H1 (cell line): ENCODE measurements at regions of chr7 and their contacts with region 1.

Region 1: DNA sequence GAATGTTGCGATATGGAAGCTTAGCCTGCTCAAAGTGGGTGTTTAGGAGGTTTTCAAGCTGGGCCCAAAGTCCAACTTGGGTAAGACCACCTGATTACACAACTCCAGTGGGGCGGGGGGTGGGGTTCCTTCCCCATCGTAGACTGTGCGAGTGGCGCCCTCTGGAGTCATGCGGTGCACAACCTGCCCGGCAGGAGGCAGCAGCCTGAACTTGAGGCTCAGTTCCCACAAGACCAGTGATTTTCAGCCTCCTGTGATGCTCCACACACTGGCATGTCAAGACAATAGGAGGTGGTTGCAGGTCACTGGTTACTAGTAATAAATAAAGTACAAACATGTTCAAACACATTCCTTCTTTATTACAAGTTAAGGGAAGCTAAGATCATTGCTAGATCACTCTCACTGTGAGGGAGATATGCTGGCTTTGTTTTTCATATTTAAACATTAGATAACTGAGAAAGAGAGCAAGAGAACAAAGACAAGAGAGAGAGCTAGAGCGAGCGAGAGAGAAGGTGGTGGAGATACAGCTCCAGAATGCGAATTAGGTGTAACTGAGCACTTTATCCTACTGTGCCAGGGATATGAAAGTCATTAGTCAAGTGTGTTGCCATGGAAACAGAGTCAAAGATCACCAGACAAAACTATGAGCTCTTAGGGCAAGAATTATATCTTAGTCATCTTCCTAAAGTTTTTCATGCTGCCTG is 97.4 kb upstream of the BMPER start:
- DNase-seq: peak; percentile 46 to 83
- H3K4me3 ChIP-seq: no peak overlapping the region
- H3K27ac ChIP-seq: no peak overlapping the region
- H3K4me1 ChIP-seq: no peaks in the 10 kb centered on the region
- H3K27me3 ChIP-seq: no peaks in the 10 kb centered on the region
- CTCF ChIP-seq: peak; percentile 85 to 92 (median 87)
- EP300 ChIP-seq: no peak
- POLR2A ChIP-seq: no peak
- RAD21 ChIP-seq: peak; percentile 80 to 86

Region 2: DNA sequence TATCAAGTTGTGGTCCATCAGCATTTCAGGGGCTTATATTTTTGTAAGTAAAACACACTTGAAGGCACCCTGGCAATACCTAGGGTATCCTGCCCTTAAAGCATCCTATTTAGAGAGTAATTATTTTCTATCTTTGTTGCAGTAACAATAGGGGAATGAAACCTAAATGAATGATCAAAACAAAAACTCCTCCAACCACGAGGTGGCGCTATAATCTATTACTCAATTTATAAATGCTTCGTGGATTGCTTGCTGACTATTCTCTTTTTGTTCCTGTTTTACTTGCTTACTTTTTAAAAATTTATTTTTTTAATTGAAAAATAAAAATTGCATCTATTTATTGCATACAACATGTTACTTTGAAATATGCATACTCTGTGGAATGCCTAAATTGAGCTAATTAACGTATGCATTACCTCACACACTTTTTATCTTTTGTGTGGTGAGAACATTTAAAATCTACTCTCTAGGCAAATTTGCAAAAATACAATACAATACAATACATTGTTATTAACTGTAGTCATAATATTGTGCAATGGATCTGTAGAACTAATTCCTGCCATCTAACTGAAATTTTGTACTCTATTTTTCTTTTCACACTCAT is 50.3 kb before region 1 on chr7:
- CTCF ChIA-PET with region 1: interaction called, 46 read pairs
- POLR2A ChIA-PET with region 1: no interaction called
- DNase-seq: no peak
- H3K4me3 ChIP-seq: no peak overlapping the region
- H3K27ac ChIP-seq: no peak overlapping the region
- H3K4me1 ChIP-seq: peaks cover 0 to 5% (median 3%) of the 10 kb centered on the region in 4 experiments; a peak in 3 of 7 replicates
- H3K27me3 ChIP-seq: no peaks in the 10 kb centered on the region
- CTCF ChIP-seq: peak in 2 of 3 experiments; percentile 18 to 41; a peak in 2 of 4 replicates
- EP300 ChIP-seq: no peak
- POLR2A ChIP-seq: no peak
- RAD21 ChIP-seq: peak; percentile 52

Region 3: DNA sequence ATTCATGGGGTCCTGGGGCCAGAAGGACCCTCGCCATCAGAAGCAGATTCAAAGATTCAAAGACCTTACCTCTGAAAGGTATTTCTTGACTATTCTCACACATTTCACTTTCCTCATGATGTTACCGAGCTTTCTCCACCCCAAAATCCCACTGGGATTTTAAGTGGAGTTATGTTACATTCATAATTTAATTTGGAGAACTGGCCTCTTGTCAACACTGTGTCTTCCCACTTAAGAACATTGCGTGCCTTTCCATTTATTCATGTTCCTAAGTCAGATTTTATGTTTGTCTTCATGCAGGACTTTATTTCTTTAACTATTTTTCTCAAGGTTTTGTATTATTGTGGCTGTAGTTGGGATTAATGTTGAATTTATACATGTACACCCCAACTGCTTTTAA is 26.1 kb before region 1 on chr7:
- CTCF ChIA-PET with region 1: interaction called, 22 read pairs
- POLR2A ChIA-PET with region 1: no interaction called
- DNase-seq: no peak
- H3K4me3 ChIP-seq: no peak overlapping the region
- H3K27ac ChIP-seq: no peak overlapping the region
- H3K4me1 ChIP-seq: no peaks in the 10 kb centered on the region
- H3K27me3 ChIP-seq: peaks cover 0 to 1% (median 0%) of the 10 kb centered on the region in 4 experiments; a peak in 1 of 7 replicates
- CTCF ChIP-seq: no peak
- EP300 ChIP-seq: no peak
- POLR2A ChIP-seq: no peak
- RAD21 ChIP-seq: no peak

Region 4: DNA sequence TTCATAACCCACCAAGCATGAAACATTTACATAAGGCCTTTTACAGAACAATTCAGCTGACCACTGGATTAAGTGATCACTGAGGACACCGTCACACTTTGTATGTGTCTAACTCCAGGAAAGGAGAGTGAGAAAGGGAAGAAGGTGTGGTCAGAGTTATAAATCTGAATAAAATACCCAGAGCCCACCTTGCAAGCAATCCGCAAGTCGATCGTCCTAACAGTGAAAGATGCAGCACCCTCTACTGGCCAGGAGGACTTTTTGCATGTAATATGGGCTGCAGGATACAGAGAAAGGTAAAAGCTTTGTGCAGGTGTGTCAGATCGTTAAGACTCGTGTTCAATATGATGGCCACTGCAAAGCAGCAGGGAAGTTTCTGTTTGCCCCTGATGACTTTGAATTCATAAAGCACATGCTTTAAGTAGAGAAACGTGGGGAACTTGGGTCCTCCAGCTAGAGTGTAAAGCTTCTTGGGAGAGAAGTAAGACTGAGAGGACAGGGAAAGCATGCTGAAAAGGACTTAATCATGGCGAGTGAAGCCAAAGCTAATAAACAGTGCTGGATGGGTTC is 28.9 kb after region 1 on chr7:
- CTCF ChIA-PET with region 1: interaction called, 27 read pairs
- POLR2A ChIA-PET with region 1: no interaction called
- DNase-seq: peak in 1 of 2 experiments; percentile 82
- H3K4me3 ChIP-seq: no peak overlapping the region
- H3K27ac ChIP-seq: no peak overlapping the region
- H3K4me1 ChIP-seq: no peaks in the 10 kb centered on the region
- H3K27me3 ChIP-seq: no peaks in the 10 kb centered on the region
- CTCF ChIP-seq: peak; percentile 40 to 80 (median 47); a peak in 3 of 4 replicates
- EP300 ChIP-seq: no peak
- POLR2A ChIP-seq: no peak
- RAD21 ChIP-seq: peak; percentile 10 to 15; a peak in 1 of 4 replicates

Region 5: DNA sequence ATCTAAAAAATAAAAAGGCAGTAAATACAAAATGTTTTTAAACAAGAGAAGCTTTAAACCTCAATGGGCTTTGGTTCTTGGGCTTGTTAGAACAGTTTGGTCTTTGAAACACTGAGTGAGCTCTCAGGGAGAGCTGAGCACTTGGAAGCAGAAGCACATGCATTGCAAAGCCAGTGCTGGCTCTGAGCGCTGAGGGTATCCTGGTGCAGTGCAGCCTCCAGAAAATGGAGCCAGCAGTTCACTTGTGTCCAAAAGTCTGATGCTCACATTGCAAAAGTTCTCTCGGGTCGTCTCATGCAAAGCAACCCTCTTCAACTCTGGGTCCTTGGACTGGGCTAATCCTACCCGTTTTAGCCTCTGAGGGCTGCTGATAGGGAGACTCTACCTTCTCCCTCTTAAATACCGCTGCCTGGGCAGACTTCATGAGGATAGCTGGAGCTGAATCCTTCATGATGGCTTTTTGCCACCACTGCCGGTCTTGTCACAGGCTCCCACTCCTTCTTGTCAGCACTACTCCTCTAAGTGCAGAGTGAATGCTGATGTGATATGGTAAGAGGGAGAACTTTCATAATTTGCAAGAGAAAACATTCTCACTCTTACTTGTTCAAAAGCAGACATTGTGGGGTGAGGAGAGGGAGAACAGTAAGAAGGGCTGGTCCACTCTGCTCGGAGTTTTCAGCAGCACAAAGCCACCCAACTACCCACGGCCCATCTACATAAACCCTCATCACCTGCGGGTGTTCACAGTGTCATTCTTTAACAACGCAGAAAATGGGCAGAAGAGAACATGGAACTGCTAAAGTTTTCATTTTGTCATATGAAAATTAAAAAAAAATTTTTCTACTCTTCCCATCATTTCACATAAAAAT is 55.2 kb after region 1 on chr7:
- CTCF ChIA-PET with region 1: no interaction called
- POLR2A ChIA-PET with region 1: no interaction called
- DNase-seq: no peak
- H3K4me3 ChIP-seq: no peak overlapping the region
- H3K27ac ChIP-seq: no peak overlapping the region
- H3K4me1 ChIP-seq: peaks cover 0 to 6% (median 2%) of the 10 kb centered on the region in 4 experiments; a peak in 3 of 7 replicates
- H3K27me3 ChIP-seq: no peaks in the 10 kb centered on the region
- CTCF ChIP-seq: no peak
- EP300 ChIP-seq: no peak
- POLR2A ChIP-seq: no peak
- RAD21 ChIP-seq: no peak

Region 6: DNA sequence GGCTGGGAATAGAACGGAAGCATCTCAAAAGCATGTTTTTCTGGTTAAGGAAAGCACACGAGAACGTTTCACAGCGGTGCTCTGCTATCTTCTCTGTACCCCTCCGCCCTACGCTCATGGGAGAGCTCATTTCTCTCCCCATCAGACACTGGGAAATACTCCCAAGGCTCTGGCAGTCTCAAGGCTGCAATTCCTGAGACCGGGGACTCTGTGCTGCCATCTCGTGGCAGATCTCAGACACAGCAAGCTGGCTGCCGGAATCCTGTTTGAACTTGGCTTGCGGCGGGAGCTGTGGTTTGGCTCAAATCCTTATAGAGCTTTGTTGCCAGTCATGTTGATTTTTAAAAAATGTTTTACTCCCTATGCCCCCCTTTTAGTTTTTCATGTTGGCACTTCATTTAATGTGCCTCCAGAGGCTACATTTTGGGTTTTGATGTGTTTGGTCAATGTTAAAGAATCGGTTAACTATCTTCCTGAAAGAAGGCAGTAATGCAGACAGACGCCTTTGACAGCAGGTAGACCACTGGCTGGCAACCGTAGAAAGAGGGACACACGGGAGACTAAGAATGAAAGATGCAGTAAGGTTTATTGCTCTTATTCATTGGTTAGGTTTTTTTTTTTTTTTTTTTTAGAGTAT is 125.0 kb after region 1 on chr7:
- CTCF ChIA-PET with region 1: interaction called, 14 read pairs
- POLR2A ChIA-PET with region 1: no interaction called
- DNase-seq: peak; percentile 75 to 91
- H3K4me3 ChIP-seq: no peak overlapping the region
- H3K27ac ChIP-seq: no peak overlapping the region
- H3K4me1 ChIP-seq: peaks cover 0 to 5% (median 0%) of the 10 kb centered on the region in 4 experiments; a peak in 2 of 7 replicates
- H3K27me3 ChIP-seq: no peaks in the 10 kb centered on the region
- CTCF ChIP-seq: peak; percentile 90 to 97 (median 92)
- EP300 ChIP-seq: no peak
- POLR2A ChIP-seq: no peak
- RAD21 ChIP-seq: peak; percentile 87 to 91

Region 7: DNA sequence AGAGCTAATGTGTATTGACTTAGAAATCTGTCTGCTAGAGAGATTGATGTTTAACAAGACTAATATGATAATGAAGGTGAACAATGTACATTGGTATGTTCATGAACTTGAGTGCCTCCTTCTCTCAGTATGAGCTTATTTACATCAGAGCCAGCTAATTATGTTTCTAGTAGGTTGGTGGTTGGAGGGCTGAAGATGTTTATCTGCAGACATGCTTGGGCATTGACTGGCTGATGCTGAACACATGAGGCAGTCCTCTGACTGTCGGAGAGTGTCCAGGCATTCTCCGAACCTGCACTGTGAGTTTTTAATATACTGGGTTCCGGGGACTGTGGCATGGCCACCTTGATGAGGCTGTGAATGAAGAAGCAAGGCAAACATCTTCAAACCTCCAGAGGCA is 144.9 kb after region 1 on chr7:
- CTCF ChIA-PET with region 1: no interaction called
- POLR2A ChIA-PET with region 1: no interaction called
- DNase-seq: no peak
- H3K4me3 ChIP-seq: no peak overlapping the region
- H3K27ac ChIP-seq: no peak overlapping the region
- H3K4me1 ChIP-seq: no peaks in the 10 kb centered on the region
- H3K27me3 ChIP-seq: no peaks in the 10 kb centered on the region
- CTCF ChIP-seq: no peak
- EP300 ChIP-seq: no peak
- POLR2A ChIP-seq: no peak
- RAD21 ChIP-seq: no peak

Region 8: DNA sequence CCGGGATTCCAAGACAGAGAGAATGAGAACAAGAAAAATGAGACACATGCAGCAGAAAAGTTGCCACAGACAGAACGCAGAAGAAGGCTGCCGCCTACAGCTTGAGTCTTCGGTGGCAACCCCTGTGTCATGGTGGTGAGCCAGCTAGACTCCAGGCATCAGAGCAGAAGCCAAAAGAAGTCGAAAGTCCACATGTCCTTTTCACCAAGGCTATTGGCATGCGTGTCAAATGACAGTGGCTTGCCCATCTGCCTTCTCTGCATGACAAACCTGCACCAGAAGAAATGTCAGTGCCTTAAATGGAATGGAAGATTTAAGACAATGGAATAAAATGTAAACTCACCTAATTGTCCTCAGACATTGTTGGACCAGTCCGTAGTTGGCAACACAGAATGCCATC is 756.2 kb after region 1 on chr7:
- CTCF ChIA-PET with region 1: no interaction called
- POLR2A ChIA-PET with region 1: no interaction called
- DNase-seq: no peak
- H3K4me3 ChIP-seq: no peak overlapping the region
- H3K27ac ChIP-seq: no peak overlapping the region
- H3K4me1 ChIP-seq: no peaks in the 10 kb centered on the region
- H3K27me3 ChIP-seq: no peaks in the 10 kb centered on the region
- CTCF ChIP-seq: no peak
- EP300 ChIP-seq: no peak
- POLR2A ChIP-seq: no peak
- RAD21 ChIP-seq: no peak